Activated CD4-positive, alpha-beta T cell treated with anti-CD3 and anti-CD28 coated beads, Interleukin-2, amount 10 ng/mL, durations not matched to agents 24 days and 14 days (primary cell): ENCODE measurements at regions of chr11 and their contacts with region 1.

Region 1: GRCh38 chr11:94493281-94494125 is at the starts of genes ANKRD49 and MRE11:
- DNase-seq: peak; percentile 99
- H3K4me3 Mint-ChIP-seq: peak within 1 kb of the TSS; percentile 96
- H3K27ac Mint-ChIP-seq: peak within 1 kb of the TSS; percentile 95
- H3K4me1 Mint-ChIP-seq: peaks cover 30% of the 10 kb centered on the region
- H3K27me3 Mint-ChIP-seq: no peaks in the 10 kb centered on the region
- total RNA-seq, gene ANKRD49: 18.4 and 22.6 TPM in 2 replicates
- total RNA-seq, gene MRE11: 45.4 and 46.5 TPM in 2 replicates

Region 2: DNA sequence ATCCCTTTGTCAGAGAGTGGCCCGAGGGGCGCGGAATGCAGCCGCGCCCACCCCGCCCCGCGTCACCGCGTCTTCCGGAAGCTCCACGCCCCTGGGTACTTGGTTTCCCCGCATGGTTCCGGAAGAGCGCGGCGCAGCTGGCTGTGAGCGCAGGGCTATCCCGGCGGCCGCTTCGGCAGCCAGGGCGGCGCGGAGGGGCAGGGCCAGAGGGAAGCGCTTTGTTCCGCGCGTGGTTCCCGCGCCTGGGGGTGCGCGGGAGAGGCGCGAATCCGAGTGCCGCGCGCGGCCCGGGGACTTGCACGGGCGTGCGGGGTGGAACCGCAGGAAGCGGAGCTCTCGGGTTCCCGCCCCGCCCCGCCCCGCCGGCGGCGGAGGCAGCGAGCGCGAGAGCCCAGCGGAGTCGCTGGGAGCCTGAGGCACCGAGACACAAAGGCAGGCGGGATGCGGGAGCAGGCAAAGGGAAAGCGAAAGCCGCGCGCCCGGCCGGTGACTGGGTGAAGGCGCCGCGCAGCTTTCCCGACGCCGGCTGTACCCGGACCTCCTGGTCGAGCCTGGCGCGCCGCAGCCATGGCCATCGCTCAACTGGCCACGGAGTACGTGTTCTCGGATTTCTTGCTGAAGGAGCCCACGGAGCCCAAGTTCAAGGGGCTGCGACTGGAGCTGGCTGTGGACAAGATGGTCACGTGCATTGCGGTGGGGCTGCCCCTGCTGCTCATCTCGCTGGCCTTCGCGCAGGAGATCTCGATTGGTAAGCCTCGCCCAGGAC is 364.6 kb before region 1 on chr11 and contains the start of gene PANX1:
- intact Hi-C with region 1: loop called (anchors 5 kb)
- DNase-seq: peak; percentile 94
- H3K4me3 Mint-ChIP-seq: no peak within 1 kb of the TSS
- H3K27ac Mint-ChIP-seq: peak within 1 kb of the TSS; percentile 88
- H3K4me1 Mint-ChIP-seq: peaks cover 21% of the 10 kb centered on the region
- H3K27me3 Mint-ChIP-seq: no peaks in the 10 kb centered on the region
- total RNA-seq, gene PANX1: 19.7 and 20.5 TPM in 2 replicates

Region 3: GRCh38 chr11:94472916-94473799 is 20.3 kb before region 1 on chr11:
- intact Hi-C with region 1: loop called (anchors 1 kb)
- DNase-seq: peak; percentile 85
- H3K4me3 Mint-ChIP-seq: peak overlapping the region; percentile 51
- H3K27ac Mint-ChIP-seq: peak overlapping the region; percentile 66
- H3K4me1 Mint-ChIP-seq: peaks cover 24% of the 10 kb centered on the region
- H3K27me3 Mint-ChIP-seq: no peaks in the 10 kb centered on the region